Caco-2 (cell line): ENCODE measurements at regions of chr14 and their contacts with region 1.

Region 1: GRCh38 chr14:71488703-71489191 is 443.5 kb upstream of the RGS6 start:
- DNase-seq: no peak
- H3K4me3 ChIP-seq: no peak overlapping the region
- H3K4me3 Mint-ChIP-seq: peak overlapping the region; percentile 35
- H3K27ac Mint-ChIP-seq: peak overlapping the region; percentile 76
- H3K4me1 ChIP-seq: peaks cover 31% of the 10 kb centered on the region
- H3K4me1 Mint-ChIP-seq: peaks cover 36% of the 10 kb centered on the region
- H3K27me3 ChIP-seq: no peaks in the 10 kb centered on the region
- H3K27me3 Mint-ChIP-seq: no peaks in the 10 kb centered on the region
- CTCF ChIP-seq: no peak

Region 2: DNA sequence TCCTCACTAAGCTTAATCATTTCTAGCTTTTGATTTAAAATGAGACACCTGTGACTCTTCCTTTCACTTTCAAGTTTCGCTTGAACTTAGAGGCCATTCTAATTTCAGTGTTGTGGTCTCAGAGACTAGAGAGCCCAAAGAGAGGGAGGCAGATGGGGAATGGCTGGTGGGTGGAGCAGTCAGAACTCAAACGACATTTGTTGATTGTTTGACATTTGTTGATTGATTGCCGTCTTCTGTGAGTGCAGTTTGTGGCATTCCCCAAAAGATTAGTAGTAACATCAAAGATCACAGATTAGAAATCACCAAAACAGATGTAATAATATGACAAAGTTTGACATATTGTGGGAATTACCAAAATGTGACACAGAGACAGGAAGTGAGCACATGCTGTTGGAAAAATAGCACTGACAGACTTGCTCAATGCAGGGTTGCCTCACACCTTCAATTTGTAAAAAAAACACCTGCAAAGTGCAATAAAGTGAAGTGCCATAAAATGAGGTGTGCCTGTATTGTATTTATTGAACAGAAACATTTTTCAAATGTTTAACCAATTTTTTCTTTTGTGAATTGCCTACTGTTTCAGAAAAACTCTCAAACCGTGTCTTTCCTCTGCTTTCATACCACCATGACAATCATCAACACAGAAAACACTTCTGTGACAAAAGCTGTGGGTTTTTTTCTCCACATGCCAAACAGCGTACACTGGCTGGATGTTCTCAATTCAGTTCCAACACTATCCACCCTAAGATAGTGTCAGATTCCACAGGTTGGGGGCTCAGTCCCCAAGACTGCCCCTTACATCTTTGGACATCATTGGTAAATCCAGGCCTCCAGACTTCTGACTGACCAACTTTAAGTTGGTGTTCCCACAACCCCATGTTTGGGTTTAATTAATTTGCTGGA is 67.2 kb after region 1 on chr14:
- CTCF ChIA-PET with region 1: interaction called, 3 read pairs
- POLR2A ChIA-PET with region 1: no interaction called
- intact Hi-C with region 1: loop called (anchors 2 kb)
- DNase-seq: peak; percentile 69 to 72
- H3K4me3 ChIP-seq: no peak overlapping the region
- H3K4me3 Mint-ChIP-seq: peak overlapping the region; percentile 68
- H3K27ac Mint-ChIP-seq: peak overlapping the region; percentile 91
- H3K4me1 ChIP-seq: peaks cover 57% of the 10 kb centered on the region
- H3K4me1 Mint-ChIP-seq: peaks cover 35% of the 10 kb centered on the region
- H3K27me3 ChIP-seq: no peaks in the 10 kb centered on the region
- H3K27me3 Mint-ChIP-seq: no peaks in the 10 kb centered on the region
- CTCF ChIP-seq: no peak

Region 3: DNA sequence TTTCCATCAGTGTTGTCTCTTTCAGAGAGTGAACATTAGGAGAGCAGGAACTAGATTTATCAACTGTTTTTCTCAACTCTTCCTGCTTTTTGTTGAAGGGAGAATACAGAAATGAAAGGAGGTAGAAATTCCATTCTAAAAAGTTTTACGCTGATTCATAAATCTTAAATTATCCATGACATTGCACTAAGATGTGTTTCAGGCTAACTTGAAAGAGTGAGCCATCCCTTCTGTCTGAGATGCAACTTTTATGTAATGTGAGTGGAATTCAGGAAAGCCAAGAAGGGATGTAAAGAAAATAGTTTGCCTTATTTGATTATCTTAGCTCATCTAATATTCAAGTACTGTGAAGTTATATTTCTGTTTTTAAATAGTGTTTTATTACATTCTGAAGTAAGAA is 94.0 kb after region 1 on chr14:
- CTCF ChIA-PET with region 1: no interaction called
- POLR2A ChIA-PET with region 1: no interaction called
- intact Hi-C with region 1: no loop called
- DNase-seq: no peak
- H3K4me3 ChIP-seq: no peak overlapping the region
- H3K4me3 Mint-ChIP-seq: no peak overlapping the region
- H3K27ac Mint-ChIP-seq: no peak overlapping the region
- H3K4me1 ChIP-seq: peaks cover 3% of the 10 kb centered on the region; the same call in 1 of the 2 replicates
- H3K4me1 Mint-ChIP-seq: peaks cover 12% of the 10 kb centered on the region
- H3K27me3 ChIP-seq: no peaks in the 10 kb centered on the region
- H3K27me3 Mint-ChIP-seq: no peaks in the 10 kb centered on the region
- CTCF ChIP-seq: no peak